ENCODE measurements at regions of chr13 and their contacts with region 1.

Region 1: DNA sequence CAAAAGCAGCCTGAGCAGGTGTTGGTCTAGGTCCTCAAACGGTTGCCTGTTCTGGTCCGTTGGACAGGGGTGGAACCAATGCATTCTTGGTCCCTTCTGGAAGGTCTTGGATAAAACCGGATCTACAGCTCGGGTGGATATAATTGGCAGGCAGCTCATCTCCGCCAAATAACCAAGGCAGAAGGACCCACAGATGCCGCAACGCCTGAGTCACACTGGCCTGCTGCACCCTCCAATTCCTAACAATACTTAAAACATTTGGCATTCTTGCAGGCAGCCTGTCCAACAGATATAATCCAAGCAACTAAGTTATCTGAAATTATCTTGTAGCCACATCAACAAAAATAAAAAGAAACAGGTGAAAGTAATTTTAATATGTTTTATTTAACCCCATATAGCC is 59.0 kb upstream of the FGF14 start:
- DNase-seq: no peak
- H3K4me3 Mint-ChIP-seq: no peak overlapping the region
- H3K27ac Mint-ChIP-seq: no peak overlapping the region
- H3K4me1 Mint-ChIP-seq: peaks cover 11% of the 10 kb centered on the region
- H3K27me3 Mint-ChIP-seq: peaks cover 4% of the 10 kb centered on the region

Region 2: DNA sequence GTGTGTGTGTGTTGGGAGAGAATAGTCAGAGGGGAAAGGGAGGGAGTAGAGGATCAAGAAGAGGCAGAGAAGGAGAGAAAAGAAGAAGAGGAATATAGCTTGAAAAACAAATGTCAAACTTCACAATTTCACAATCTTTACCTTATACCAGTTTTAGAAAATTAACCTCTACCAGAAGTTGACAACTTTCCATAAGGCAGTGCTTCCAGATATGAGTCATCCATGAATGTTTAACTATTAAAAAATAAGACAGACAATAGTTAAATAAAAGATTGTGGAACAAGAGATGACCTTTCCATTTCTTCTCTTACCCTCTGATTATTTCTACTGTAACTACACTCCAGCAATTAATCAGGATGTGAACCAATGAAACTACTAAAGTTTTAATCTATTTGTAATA is 779.0 kb before region 1 on chr13:
- intact Hi-C with region 1: no loop called
- DNase-seq: no peak
- H3K4me3 Mint-ChIP-seq: no peak overlapping the region
- H3K27ac Mint-ChIP-seq: no peak overlapping the region
- H3K4me1 Mint-ChIP-seq: no peaks in the 10 kb centered on the region
- H3K27me3 Mint-ChIP-seq: no peaks in the 10 kb centered on the region

Region 3: DNA sequence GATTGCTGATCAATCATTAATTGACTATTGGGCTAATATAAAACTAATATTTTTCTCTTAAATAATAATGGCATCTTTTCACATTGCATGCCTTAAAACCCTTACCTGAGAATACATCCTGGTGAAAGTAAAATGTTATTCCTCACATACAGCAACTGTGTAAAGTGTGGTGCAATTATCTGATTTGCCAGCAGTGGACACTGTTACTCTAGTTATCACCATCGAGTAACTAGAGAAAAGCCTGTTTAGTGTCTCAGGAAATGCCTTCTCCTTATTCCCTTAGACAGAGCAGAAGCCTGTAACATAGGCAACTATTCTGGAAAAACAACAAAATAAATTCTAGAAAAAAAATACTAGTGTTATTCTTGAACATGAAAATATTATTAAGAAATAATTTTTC is 518.8 kb before region 1 on chr13:
- intact Hi-C with region 1: loop called (anchors 5 kb)
- DNase-seq: no peak
- H3K4me3 Mint-ChIP-seq: no peak overlapping the region
- H3K27ac Mint-ChIP-seq: no peak overlapping the region
- H3K4me1 Mint-ChIP-seq: no peaks in the 10 kb centered on the region
- H3K27me3 Mint-ChIP-seq: no peaks in the 10 kb centered on the region

Region 4: DNA sequence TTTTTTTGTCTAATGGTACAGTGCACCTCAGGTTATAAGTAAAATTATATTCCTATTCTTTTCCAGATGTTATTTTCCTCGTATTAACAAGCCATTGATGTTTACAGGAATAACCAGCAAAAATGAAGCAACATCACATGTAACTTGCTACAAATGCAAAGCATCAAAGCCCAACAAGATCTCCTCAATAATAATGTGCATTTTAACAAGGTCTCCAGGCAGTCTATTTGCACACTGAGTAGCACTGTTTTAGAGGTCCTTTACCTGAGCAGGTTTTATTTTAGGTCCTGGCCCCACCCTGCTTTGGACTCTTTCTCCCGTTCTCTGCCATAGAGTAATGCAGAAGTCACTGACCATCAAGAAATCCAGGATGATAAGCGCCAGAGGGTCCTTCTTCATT is 357.3 kb before region 1 on chr13:
- intact Hi-C with region 1: no loop called
- DNase-seq: no peak
- H3K4me3 Mint-ChIP-seq: no peak overlapping the region
- H3K27ac Mint-ChIP-seq: no peak overlapping the region
- H3K4me1 Mint-ChIP-seq: no peaks in the 10 kb centered on the region
- H3K27me3 Mint-ChIP-seq: no peaks in the 10 kb centered on the region

Region 5: GRCh38 chr13:102141625-102142472 is 319.0 kb before region 1 on chr13:
- intact Hi-C with region 1: loop called (anchors 1 kb)
- DNase-seq: no peak
- H3K4me3 Mint-ChIP-seq: no peak overlapping the region
- H3K27ac Mint-ChIP-seq: no peak overlapping the region
- H3K4me1 Mint-ChIP-seq: no peaks in the 10 kb centered on the region
- H3K27me3 Mint-ChIP-seq: no peaks in the 10 kb centered on the region

Region 6: GRCh38 chr13:102402290-102402689 is 58.5 kb before region 1 on chr13:
- intact Hi-C with region 1: loop called (anchors 2 kb)
- DNase-seq: no peak
- H3K4me3 Mint-ChIP-seq: peak overlapping the region; percentile 71
- H3K27ac Mint-ChIP-seq: peak overlapping the region; percentile 36
- H3K4me1 Mint-ChIP-seq: peaks cover 27% of the 10 kb centered on the region
- H3K27me3 Mint-ChIP-seq: peaks cover 54% of the 10 kb centered on the region